ENCODE measurements at regions of chr13 and their contacts with region 1.

Region 1: DNA sequence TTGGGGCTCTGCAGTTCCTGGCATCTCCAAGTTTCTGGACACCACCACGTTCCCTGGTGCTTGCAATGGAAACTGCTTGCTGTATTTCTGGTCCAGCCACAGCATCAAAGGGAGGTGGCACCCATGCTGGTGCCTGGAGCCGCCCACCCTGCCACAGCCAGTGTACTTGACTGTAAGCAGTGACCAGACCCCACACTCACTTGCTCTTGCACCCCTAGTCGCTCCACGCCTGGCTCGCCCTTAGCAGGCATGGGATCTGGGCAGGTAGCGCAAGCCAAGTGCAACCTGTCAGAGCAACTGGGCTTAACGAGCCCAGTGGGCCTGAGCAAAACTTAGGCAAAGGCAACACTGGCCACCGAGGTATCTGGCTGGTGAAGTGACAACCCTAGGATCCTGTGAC is 648.2 kb upstream of the PCDH9 start:
- DNase-seq: no peak
- ATAC-seq: no peak
- H3K4me3 ChIP-seq: no peak overlapping the region
- H3K27ac ChIP-seq: no peak overlapping the region
- H3K4me1 ChIP-seq: no peaks in the 10 kb centered on the region
- H3K27me3 ChIP-seq: no peaks in the 10 kb centered on the region
- CTCF ChIP-seq: no peak
- POLR2A ChIP-seq: no peak
- RAD21 ChIP-seq: no peak

Region 2: DNA sequence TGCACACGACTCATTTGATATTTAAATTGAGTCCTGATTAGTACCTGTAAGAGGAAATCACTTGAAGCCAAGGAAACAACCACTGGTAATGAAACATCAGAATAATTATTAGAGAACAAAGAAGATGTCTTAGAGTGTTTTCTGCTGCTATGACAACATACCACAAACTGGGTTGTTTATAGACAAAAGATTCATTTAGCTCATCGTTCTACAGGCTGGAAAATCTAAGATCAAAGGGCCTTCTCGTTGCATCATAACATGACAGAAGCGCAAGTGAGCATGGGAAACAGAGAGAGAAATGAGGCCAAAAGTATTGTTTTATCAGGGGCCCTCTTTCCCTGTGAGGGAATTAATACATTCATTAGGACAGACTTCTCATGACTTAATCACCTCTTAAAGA is 375.8 kb after region 1 on chr13:
- CTCF ChIA-PET with region 1: no interaction called
- POLR2A ChIA-PET with region 1: no interaction called
- dilution Hi-C with region 1: no loop called
- in situ Hi-C with region 1: no loop called
- intact Hi-C with region 1: no loop called
- DNase-seq: no peak
- ATAC-seq: no peak
- H3K4me3 ChIP-seq: no peak overlapping the region
- H3K27ac ChIP-seq: no peak overlapping the region
- H3K4me1 ChIP-seq: no peaks in the 10 kb centered on the region
- H3K27me3 ChIP-seq: no peaks in the 10 kb centered on the region
- CTCF ChIP-seq: no peak
- POLR2A ChIP-seq: no peak
- RAD21 ChIP-seq: no peak

Region 3: GRCh38 chr13:69204620-69205019 is 1326.2 kb after region 1 on chr13:
- CTCF ChIA-PET with region 1: no interaction called
- POLR2A ChIA-PET with region 1: no interaction called
- dilution Hi-C with region 1: no loop called
- in situ Hi-C with region 1: no loop called
- intact Hi-C with region 1: loop called (anchors 5 kb)
- DNase-seq: no peak
- ATAC-seq: no peak
- H3K4me3 ChIP-seq: no peak overlapping the region
- H3K27ac ChIP-seq: no peak overlapping the region
- H3K4me1 ChIP-seq: no peaks in the 10 kb centered on the region
- H3K27me3 ChIP-seq: no peaks in the 10 kb centered on the region
- CTCF ChIP-seq: no peak
- POLR2A ChIP-seq: no peak
- RAD21 ChIP-seq: no peak